Vagina (tissue), 2 donors: ENCODE measurements at regions of chr5 and their contacts with region 1.

Region 1: DNA sequence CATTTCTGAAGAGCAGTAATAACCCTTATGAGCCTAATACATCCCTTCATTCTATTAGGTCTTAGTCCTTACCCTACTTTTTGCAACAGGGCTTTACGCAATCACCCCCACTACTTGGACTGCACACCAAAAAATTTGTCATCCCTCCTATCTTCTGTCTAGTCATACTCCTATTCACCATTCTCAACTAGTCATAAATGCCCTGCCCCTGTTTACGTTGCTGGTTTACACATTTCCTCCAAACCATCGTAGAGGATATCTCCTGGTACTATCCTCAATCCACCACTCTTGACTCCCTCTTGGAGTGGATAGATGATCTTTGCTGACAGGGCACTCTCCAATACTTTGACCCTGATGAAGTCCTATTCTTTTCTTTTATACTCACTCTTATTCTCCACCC is 98.2 kb upstream of the CCNG1 start:
- DNase-seq: no peak
- H3K4me3 ChIP-seq: no peak overlapping the region
- H3K27ac ChIP-seq: no peak overlapping the region
- H3K4me1 ChIP-seq: no peaks in the 10 kb centered on the region
- H3K27me3 ChIP-seq: no peaks in the 10 kb centered on the region
- CTCF ChIP-seq: no peak
- POLR2A ChIP-seq: no peak

Region 2: GRCh38 chr5:163135849-163136248 is 203.3 kb before region 1 on chr5:
- intact Hi-C with region 1: no loop called
- DNase-seq: no peak
- H3K4me3 ChIP-seq: no peak overlapping the region
- H3K27ac ChIP-seq: no peak overlapping the region
- H3K4me1 ChIP-seq: no peaks in the 10 kb centered on the region
- H3K27me3 ChIP-seq: no peaks in the 10 kb centered on the region
- CTCF ChIP-seq: no peak
- POLR2A ChIP-seq: no peak

Region 3: DNA sequence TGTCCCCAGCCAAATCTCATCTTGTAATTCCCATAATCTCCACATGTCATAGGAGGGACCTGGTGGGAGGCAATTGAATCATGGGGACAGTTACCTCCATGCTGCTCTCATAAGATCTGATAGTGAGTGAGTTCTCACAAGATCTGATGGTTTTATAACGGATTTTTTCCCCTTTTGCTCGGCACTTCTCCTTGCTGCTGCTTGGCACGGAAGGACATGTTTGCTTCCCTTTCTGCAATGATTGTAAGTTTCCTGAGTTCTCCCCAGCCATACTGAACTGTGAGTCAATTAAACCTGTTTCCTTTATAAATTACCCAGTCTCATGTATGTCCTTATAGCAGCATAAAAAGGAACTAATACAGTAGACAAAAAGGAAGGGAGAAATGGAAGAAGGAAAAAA is 21.5 kb after region 1 on chr5:
- intact Hi-C with region 1: loop called (anchors 1 kb)
- DNase-seq: no peak
- H3K4me3 ChIP-seq: no peak overlapping the region
- H3K27ac ChIP-seq: no peak overlapping the region
- H3K4me1 ChIP-seq: no peaks in the 10 kb centered on the region
- H3K27me3 ChIP-seq: no peaks in the 10 kb centered on the region
- CTCF ChIP-seq: no peak
- POLR2A ChIP-seq: no peak